ENCODE measurements at regions of chr4 and their contacts with region 1.

Region 1: GRCh38 chr4:84235126-84235944 is 263.8 kb downstream of the NKX6-1 start:
- DNase-seq: no peak
- ATAC-seq: no peak
- H3K4me3 ChIP-seq: no peak overlapping the region
- H3K27ac ChIP-seq: no peak overlapping the region
- H3K4me1 ChIP-seq: peaks cover 18% of the 10 kb centered on the region
- H3K27me3 ChIP-seq: no peaks in the 10 kb centered on the region
- CTCF ChIP-seq: no peak

Region 2: GRCh38 chr4:84249521-84249920 is 14.2 kb after region 1 on chr4:
- CTCF ChIA-PET with region 1: interaction called, 10 read pairs
- POLR2A ChIA-PET with region 1: no interaction called
- intact Hi-C with region 1: no loop called
- DNase-seq: no peak
- ATAC-seq: no peak
- H3K4me3 ChIP-seq: no peak overlapping the region
- H3K27ac ChIP-seq: no peak overlapping the region
- H3K4me1 ChIP-seq: no peaks in the 10 kb centered on the region
- H3K27me3 ChIP-seq: no peaks in the 10 kb centered on the region
- CTCF ChIP-seq: no peak

Region 3: DNA sequence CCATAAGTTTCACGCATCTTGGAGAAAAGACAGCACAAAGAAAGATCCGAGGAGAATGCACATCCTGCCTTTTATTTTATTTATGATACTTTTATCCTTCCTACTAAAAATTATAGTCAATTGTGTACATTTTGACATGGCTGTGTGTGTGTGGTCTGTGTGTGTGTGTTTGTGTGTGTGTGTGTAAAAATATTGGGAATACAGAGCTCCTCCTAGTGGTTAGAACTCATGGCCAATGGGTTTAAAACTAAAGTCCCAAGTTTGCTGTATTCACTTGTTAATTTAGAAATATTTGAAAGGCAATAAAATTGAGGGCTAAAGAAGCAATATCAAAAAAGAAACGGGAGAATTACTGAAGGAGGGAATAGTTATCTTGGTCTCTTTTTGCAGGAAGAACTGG is 216.2 kb after region 1 on chr4:
- CTCF ChIA-PET with region 1: no interaction called
- POLR2A ChIA-PET with region 1: no interaction called
- intact Hi-C with region 1: loop called (anchors 2 kb)
- DNase-seq: peak; percentile 44
- ATAC-seq: no peak
- H3K4me3 ChIP-seq: no peak overlapping the region
- H3K27ac ChIP-seq: no peak overlapping the region
- H3K4me1 ChIP-seq: peaks cover 21% of the 10 kb centered on the region
- H3K27me3 ChIP-seq: no peaks in the 10 kb centered on the region
- CTCF ChIP-seq: peak; percentile 83

Region 4: DNA sequence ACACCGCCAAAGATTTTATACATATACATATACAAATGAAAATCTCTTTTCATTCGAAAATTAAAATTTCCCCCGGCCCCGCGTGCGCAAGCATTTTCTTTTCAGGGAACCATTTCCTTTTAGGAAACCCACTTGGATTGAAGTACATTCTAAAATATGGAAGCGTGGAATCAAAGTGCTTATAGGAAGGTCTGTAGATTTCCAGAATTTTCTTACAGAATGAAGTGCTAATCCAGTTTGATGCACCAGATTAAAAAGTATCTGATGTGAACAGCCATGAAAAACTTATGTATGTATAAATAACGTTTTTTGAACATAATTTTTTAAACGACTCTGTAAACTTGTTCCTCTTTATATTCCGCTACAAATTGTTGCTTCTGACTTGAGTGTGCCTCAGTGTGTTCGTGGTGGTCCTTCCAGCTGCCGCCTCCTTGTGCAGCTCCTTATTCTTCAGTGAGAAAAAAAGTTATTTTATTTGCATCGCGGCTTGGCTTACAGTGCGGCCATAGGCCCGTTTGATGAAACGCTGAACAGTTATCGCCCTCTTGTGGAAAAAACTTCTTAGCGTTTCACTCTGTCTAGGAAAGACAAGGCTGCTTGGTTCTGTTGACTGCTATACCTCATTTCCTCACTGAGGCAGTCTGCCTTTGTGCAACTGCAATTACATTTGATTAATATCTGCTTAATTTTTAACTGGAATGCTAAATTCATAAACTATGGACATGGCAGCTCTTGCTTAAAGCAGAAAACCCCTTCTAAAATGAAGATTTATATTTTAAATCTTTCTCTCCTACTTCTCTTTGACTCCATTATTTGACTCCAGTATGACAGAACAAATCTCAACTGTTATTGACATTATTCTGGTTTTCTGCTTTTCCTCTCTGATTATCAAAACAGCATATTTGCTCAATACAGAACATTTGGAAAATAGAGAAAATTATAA is 268.4 kb after region 1 on chr4:
- CTCF ChIA-PET with region 1: no interaction called
- POLR2A ChIA-PET with region 1: no interaction called
- intact Hi-C with region 1: loop called (anchors 10 kb)
- DNase-seq: peak; percentile 78
- ATAC-seq: peak; percentile 61
- H3K4me3 ChIP-seq: no peak overlapping the region
- H3K27ac ChIP-seq: no peak overlapping the region
- H3K4me1 ChIP-seq: no peaks in the 10 kb centered on the region
- H3K27me3 ChIP-seq: no peaks in the 10 kb centered on the region
- CTCF ChIP-seq: peak; percentile 82

Region 5: GRCh38 chr4:85370430-85371032 is 1135.2 kb after region 1 on chr4:
- CTCF ChIA-PET with region 1: no interaction called
- POLR2A ChIA-PET with region 1: no interaction called
- intact Hi-C with region 1: no loop called
- DNase-seq: peak; percentile 49
- ATAC-seq: peak; percentile 81
- H3K4me3 ChIP-seq: no peak overlapping the region
- H3K27ac ChIP-seq: no peak overlapping the region
- H3K4me1 ChIP-seq: no peaks in the 10 kb centered on the region
- H3K27me3 ChIP-seq: 0 out of 2 replicates have a peak, but pooled peaks cover 1% of the 10 kb centered on the region
- CTCF ChIP-seq: peak; percentile 76

Measured in PC-3 (cell line).